Heart right ventricle (tissue), 16 donors: ENCODE measurements at regions of chr7 and their contacts with region 1.

Region 1: GRCh38 chr7:104983578-104984539 is 30.1 kb upstream of the KMT2E start:
- DNase-seq: peak; percentile 90 to 91
- ATAC-seq: peak; percentile 93 to 97 (median 96)
- H3K4me3 ChIP-seq: peak overlapping the region; percentile 34 to 73 (median 60)
- H3K27ac ChIP-seq: peak overlapping the region; percentile 95 to 99 (median 98)
- H3K4me1 ChIP-seq: peaks cover 9 to 93% (median 57%) of the 10 kb centered on the region in 9 donors
- H3K27me3 ChIP-seq: no peaks in the 10 kb centered on the region
- CTCF ChIP-seq: peak; percentile 31 to 82 (median 62)

Region 2: GRCh38 chr7:104931181-104931781 is 52.6 kb before region 1 on chr7:
- intact Hi-C with region 1: no loop called
- DNase-seq: no peak
- ATAC-seq: peak in 6 of 8 donors; percentile 29 to 57 (median 50)
- H3K4me3 ChIP-seq: no peak overlapping the region
- H3K27ac ChIP-seq: peak overlapping the region in 1 of 10 donors; percentile 5
- H3K4me1 ChIP-seq: peaks cover 0 to 13% (median 6%) of the 10 kb centered on the region in 9 donors
- H3K27me3 ChIP-seq: no peaks in the 10 kb centered on the region
- CTCF ChIP-seq: no peak

Region 3: DNA sequence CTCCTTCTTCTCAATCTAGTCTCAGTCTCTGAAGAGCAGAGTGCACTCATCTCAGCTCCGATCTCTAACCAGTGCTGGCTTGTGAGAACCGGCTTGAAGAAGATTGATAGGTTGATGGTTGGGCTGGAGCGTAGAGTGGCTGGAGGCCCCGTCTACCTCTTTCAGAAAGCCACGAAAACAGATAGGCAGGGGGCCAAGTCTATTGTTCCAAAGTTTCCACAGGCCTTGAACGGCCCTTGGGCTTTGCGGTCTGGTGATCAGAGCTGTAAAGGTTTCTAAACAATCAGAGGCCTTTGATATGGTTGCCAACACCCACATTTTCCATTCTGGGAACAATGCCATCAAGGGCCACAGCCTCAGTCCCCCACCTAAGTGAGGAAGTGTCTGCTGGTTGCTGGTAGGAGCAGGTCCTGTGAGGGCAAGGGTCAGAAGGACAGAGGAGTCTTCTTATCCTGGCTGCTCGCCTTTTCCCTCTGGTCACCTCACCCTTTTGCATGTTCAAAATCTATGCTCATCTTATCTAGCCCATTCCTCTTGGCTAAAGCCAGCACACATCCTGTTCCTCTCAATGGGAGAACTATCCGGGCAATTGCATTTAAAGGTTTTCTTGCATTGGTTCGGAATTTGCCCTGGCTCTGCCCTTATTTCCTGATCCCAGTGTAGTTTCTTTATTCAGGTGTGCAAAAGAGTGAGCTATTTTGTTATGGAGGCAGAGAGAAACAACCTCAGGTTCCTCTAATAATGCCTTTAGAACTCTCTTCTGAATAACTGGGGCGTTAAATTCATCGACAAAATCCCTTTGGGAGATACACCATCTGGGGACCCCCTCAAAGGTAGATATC is 40.1 kb before region 1 on chr7:
- intact Hi-C with region 1: loop called in 6 of 10 experiments (anchors 2 to 5 kb)
- DNase-seq: peak; percentile 32 to 94
- ATAC-seq: peak; percentile 30 to 76 (median 63)
- H3K4me3 ChIP-seq: peak overlapping the region in 3 of 10 donors; percentile 16 to 55 (median 31)
- H3K27ac ChIP-seq: peak overlapping the region; percentile 77 to 98 (median 94)
- H3K4me1 ChIP-seq: peaks cover 0 to 44% (median 36%) of the 10 kb centered on the region in 9 donors
- H3K27me3 ChIP-seq: no peaks in the 10 kb centered on the region
- CTCF ChIP-seq: no peak

Region 4: DNA sequence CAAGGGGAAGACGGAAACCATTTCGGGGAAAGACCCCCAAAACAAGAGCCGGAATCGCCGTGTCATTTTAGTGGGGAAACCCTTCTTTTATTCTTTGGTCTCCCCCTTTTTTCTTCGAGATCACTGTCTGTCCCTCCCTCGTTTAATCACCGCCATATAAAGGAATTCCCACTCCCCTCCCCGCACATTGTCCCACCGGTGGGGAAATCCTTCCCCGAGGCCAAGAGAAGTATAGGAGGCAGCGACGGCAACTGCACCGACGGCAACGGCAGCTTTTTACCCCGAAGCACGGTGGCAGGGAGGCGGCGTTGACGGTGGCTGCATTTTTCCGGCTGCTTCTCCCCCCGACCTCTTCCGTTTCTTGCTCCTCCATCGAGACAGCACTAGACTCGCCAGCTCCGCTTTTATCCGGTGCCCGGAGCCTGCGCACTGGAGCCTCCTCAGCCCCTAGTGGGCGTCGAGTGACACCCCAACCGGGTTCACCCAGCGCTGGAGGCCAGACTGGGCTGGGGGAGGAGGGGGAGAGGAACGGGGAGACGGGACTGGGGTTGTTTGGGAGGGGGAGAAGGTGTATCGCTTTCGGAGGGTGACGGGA is 29.5 kb after region 1 on chr7:
- intact Hi-C with region 1: loop called in 7 of 10 experiments (anchors 1 to 2 kb)
- DNase-seq: peak; percentile 94 to 96
- ATAC-seq: peak; percentile 82 to 93 (median 85)
- H3K4me3 ChIP-seq: peak overlapping the region; percentile 64 to 92 (median 82)
- H3K27ac ChIP-seq: peak overlapping the region; percentile 93 to 100 (median 100)
- H3K4me1 ChIP-seq: peaks cover 0 to 51% (median 45%) of the 10 kb centered on the region in 9 donors
- H3K27me3 ChIP-seq: no peaks in the 10 kb centered on the region
- CTCF ChIP-seq: peak; percentile 32 to 62 (median 51)

Region 5: DNA sequence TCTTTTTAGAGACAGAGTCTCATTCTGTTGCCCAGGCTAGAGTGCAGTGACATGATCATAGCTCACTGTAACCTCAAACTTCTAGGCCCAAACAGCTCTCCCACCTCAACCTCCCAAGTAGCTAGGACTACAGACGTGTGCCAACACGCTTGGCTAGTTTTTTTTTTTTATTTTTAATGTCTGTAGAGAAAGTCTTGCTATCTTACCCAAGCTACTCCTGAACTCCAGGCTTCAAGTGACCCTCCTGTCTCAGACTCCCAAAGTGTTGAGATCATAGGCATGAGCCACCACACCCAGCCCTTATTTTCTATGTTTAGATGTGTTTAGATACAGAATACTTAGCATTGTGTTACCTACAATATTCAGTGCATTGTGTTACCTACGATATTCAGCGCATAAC is 76.6 kb after region 1 on chr7:
- intact Hi-C with region 1: loop called in 5 of 10 experiments (anchors 5 to 10 kb)
- DNase-seq: no peak
- ATAC-seq: peak in 4 of 8 donors; percentile 8 to 47 (median 20)
- H3K4me3 ChIP-seq: no peak overlapping the region
- H3K27ac ChIP-seq: peak overlapping the region in 2 of 10 donors; percentile 33 to 50
- H3K4me1 ChIP-seq: peaks cover 0 to 95% (median 58%) of the 10 kb centered on the region in 9 donors
- H3K27me3 ChIP-seq: no peaks in the 10 kb centered on the region
- CTCF ChIP-seq: no peak

Region 6: DNA sequence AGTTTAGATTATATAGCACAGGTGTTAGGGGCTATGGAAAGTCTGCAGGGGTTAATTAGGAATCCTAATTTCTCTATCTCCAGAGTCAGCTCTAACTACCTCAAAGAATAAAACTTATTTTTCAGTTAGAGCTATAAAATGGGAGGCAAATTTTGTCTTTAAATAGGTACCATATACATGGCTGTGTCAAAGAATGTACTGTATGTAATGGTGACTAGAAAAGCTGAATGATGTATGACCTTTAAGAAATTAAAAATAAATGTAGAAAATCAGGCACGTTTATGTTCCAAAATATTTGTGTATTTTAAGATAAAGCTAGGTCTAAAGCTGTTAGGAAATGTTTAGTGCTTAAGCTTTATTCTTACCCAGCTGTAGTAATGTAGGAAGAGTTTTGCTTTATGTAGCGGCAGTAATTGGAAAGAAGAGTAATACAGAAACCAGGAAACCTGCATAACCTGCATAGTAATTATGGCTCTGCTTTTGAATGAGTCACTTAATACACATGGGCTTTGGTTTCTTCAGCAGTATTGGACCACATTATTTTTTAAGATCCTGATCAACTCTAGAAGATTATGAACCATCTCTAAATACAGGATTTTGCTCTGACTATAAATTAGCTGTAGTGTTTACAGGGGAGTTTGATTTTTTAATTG is 115.1 kb after region 1 on chr7:
- intact Hi-C with region 1: loop called in 3 of 10 experiments (anchors 5 to 10 kb)
- DNase-seq: no peak
- ATAC-seq: peak in 1 of 8 donors; percentile 32
- H3K4me3 ChIP-seq: no peak overlapping the region
- H3K27ac ChIP-seq: peak overlapping the region in 1 of 10 donors; percentile 17
- H3K4me1 ChIP-seq: peaks cover 0 to 45% (median 19%) of the 10 kb centered on the region in 9 donors
- H3K27me3 ChIP-seq: no peaks in the 10 kb centered on the region
- CTCF ChIP-seq: no peak

Region 7: GRCh38 chr7:105112440-105113418 is 128.9 kb after region 1 on chr7:
- intact Hi-C with region 1: loop called in 2 of 10 experiments (anchors 5 to 10 kb)
- DNase-seq: no peak
- ATAC-seq: peak in 6 of 8 donors; percentile 28 to 68 (median 42)
- H3K4me3 ChIP-seq: no peak overlapping the region
- H3K27ac ChIP-seq: no peak overlapping the region
- H3K4me1 ChIP-seq: no peaks in the 10 kb centered on the region
- H3K27me3 ChIP-seq: no peaks in the 10 kb centered on the region
- CTCF ChIP-seq: no peak

Region 8: DNA sequence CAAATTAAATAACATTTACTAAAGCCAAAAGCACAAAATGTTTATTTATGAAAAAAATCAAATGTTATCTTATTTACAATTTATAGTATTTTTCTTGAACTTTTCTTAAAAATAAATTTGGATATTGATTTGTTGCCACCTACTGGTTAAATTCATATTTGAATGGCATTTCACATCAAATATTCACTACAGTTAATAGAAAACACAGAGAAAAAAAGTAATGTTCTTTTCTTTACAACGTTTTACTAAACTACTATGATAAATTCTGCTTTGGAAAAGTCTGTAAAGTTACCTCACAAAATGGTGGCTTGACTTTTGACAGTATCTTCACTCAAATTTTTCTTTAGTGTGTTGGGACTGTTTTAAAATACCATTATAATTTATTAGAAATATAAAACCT is 352.1 kb after region 1 on chr7:
- intact Hi-C with region 1: loop called in 1 of 10 experiments (anchors 5 kb)
- DNase-seq: no peak
- ATAC-seq: no peak
- H3K4me3 ChIP-seq: no peak overlapping the region
- H3K27ac ChIP-seq: no peak overlapping the region
- H3K4me1 ChIP-seq: peaks cover 0 to 18% (median 6%) of the 10 kb centered on the region in 9 donors
- H3K27me3 ChIP-seq: no peaks in the 10 kb centered on the region
- CTCF ChIP-seq: peak; percentile 22 to 66 (median 50)